ENCODE measurements at regions of chr5 and their contacts with region 1.

Region 1: GRCh38 chr5:95730730-95731570 is at the start of gene RHOBTB3:
- DNase-seq: peak; percentile 98
- H3K4me3 ChIP-seq: peak within 1 kb of the TSS; percentile 72 to 92 (median 76)
- H3K27ac ChIP-seq: peak within 1 kb of the TSS; percentile 93 to 99 (median 96)
- H3K4me1 ChIP-seq: peaks cover 36 to 81% (median 67%) of the 10 kb centered on the region in 4 donors
- H3K27me3 ChIP-seq: no peaks in the 10 kb centered on the region
- CTCF ChIP-seq: no peak
- EP300 ChIP-seq: no peak
- POLR2A ChIP-seq: peak; percentile 57
- total RNA-seq, gene RHOBTB3: 72.9 to 165 (median 89.2) TPM

Region 2: DNA sequence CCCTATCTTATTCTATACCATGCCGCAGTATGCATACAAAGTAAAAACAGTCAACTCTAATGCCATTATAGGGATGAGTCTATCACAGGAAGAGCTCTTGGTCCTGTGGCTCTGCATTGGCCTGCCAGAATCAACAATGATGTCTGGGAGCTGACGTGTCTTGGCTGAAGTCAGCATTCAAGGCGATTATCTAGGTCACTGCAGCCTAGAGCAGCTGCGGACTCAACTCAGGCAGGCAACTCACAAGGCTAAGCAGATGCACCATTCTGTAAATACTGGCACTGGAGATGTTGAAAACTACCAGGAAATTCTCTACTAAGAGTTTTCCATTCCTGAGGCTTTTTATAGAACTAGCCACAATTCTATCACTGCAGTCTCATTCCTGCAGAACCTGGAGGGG is 61.4 kb before region 1 on chr5:
- intact Hi-C with region 1: loop called (anchors 2 kb)
- DNase-seq: peak; percentile 93
- H3K4me3 ChIP-seq: no peak overlapping the region
- H3K27ac ChIP-seq: peak overlapping the region; percentile 62 to 83 (median 79)
- H3K4me1 ChIP-seq: peaks cover 17 to 38% (median 25%) of the 10 kb centered on the region in 4 donors
- H3K27me3 ChIP-seq: no peaks in the 10 kb centered on the region
- CTCF ChIP-seq: peak in 1 of 3 experiments; percentile 4
- EP300 ChIP-seq: no peak
- POLR2A ChIP-seq: no peak

Region 3: DNA sequence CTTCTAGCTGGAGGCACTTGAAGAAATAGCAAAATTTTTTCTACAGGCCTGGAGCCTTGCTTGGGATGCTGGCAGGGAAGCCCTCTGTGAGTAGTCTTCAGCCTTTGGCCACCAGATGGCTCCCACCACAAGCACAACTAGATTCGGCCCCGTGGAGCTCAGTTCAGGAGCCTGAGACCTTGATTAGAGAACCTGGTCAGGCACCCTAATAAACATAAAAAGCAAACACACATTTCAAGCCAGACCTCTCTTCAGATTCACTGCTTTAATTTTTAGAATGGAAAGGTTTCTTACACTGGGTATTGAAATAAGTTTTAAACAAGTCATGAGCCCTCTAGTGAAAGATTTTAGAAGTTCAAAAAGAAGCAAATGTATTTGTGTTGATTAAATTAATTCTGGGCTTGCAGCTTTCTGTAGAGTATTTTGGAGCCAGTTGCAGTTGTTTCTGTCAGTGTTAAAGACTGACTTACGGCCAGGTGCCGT is 50.2 kb after region 1 on chr5:
- intact Hi-C with region 1: loop called (anchors 5 kb)
- DNase-seq: peak; percentile 95
- H3K4me3 ChIP-seq: no peak overlapping the region
- H3K27ac ChIP-seq: peak overlapping the region; percentile 46 to 65 (median 59)
- H3K4me1 ChIP-seq: peaks cover 13 to 40% (median 24%) of the 10 kb centered on the region in 4 donors
- H3K27me3 ChIP-seq: no peaks in the 10 kb centered on the region
- CTCF ChIP-seq: peak; percentile 85 to 93 (median 85)
- EP300 ChIP-seq: no peak
- POLR2A ChIP-seq: no peak